ENCODE measurements at regions of chr7 and their contacts with region 1.

Region 1: GRCh38 chr7:139016931-139017511 is 18.8 kb downstream of the ZC3HAV1L start:
- DNase-seq: peak; percentile 50
- H3K4me3 ChIP-seq: no peak overlapping the region
- H3K27ac ChIP-seq: no peak overlapping the region
- H3K4me1 ChIP-seq: no peaks in the 10 kb centered on the region
- H3K27me3 ChIP-seq: no peaks in the 10 kb centered on the region
- CTCF ChIP-seq: peak in 3 of 4 experiments; percentile 54 to 65 (median 59)
- POLR2A ChIP-seq: no peak

Region 2: DNA sequence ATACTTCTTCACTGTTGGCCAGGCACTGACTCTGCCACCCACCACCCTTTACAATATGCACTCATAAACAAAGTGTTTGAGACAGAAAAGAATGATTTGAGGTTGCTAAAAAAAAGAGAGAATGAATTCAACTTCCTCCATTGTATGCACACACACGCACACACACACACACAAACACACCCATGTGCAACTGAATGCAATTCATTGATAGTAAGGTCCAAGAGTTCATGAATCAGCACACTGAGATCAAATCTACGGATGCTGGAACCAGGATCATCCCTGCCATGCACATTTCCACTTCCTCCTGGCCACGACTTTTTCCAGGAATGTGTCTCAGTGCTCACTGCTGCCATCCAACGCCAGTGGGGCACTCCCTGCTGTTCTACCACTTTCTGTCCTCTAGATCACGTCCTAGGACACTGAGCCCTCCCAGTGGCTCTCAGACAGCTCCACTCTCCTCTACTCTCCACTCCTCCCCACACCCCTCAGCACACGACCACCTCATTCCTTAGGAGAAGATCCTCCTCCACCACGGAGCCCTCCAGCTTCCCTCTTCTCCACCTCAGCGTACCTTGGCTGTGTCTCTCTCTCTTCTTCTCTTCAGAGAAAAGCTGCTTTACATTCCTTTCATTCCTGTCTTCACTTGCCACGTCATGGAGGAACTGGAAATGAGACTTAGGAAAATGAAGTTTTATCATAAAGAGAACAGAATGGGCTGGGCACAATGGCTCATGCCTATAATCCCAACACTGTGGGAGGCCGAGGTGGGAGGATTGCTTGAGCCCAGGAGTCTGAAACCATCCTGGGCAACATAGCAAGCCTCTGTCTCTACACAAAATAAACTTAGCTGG is 231.2 kb before region 1 on chr7:
- intact Hi-C with region 1: loop called (anchors 10 kb)
- DNase-seq: no peak
- H3K4me3 ChIP-seq: no peak overlapping the region
- H3K27ac ChIP-seq: no peak overlapping the region
- H3K4me1 ChIP-seq: no peaks in the 10 kb centered on the region
- H3K27me3 ChIP-seq: no peaks in the 10 kb centered on the region
- CTCF ChIP-seq: no peak
- POLR2A ChIP-seq: no peak

Region 3: GRCh38 chr7:139075031-139075652 is 58.1 kb after region 1 on chr7:
- intact Hi-C with region 1: loop called (anchors 2 kb)
- DNase-seq: peak; percentile 75
- H3K4me3 ChIP-seq: no peak overlapping the region
- H3K27ac ChIP-seq: peak overlapping the region in 1 of 2 donors; percentile 45
- H3K4me1 ChIP-seq: no peaks in the 10 kb centered on the region
- H3K27me3 ChIP-seq: no peaks in the 10 kb centered on the region
- CTCF ChIP-seq: peak; percentile 73 to 92 (median 78)
- POLR2A ChIP-seq: no peak

Measured in prostate gland (tissue), 2 donors.